Heart right ventricle (tissue), 16 donors: ENCODE measurements at regions of chr4 and their contacts with region 1.

Region 1: GRCh38 chr4:138680989-138681604 is 334.5 kb upstream of the NOCT start:
- DNase-seq: peak; percentile 63 to 81
- ATAC-seq: peak; percentile 61 to 86 (median 71)
- H3K4me3 ChIP-seq: no peak overlapping the region
- H3K27ac ChIP-seq: no peak overlapping the region
- H3K4me1 ChIP-seq: peaks cover 0 to 19% (median 4%) of the 10 kb centered on the region in 9 donors
- H3K27me3 ChIP-seq: peaks cover 0 to 10% (median 0%) of the 10 kb centered on the region in 7 donors
- CTCF ChIP-seq: peak; percentile 91 to 95 (median 94)

Region 2: DNA sequence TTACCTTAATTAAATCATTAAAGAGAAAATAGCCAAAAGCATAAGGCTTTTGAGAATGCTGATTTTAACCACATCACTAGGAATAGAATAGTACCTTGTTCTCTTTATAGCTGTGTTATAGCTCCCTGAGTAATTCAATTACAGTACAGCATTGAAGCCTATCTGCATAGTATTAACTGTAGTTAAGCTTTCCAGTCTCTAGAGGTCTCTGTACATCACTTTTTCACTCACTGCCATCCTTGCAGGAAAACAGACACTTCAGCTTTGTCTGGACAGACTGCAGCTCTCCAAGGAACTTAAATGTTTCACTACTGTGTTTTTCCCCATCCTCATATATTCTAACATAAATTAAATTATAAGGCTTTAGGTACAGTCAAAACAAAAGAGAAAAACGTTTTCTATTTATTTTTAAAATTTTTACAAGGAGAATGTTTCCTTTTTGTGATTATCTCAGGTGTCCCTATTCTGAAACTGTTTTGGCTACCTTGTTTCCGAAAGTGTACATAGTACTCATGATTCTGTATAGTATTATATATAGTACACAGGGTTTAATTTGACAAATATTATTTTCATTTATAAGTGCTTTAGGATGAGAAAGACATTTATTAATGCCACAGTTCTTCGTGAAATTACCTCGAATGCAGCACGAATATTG is 1556.7 kb before region 1 on chr4:
- intact Hi-C with region 1: loop called in 5 of 10 experiments (anchors 5 to 10 kb)
- DNase-seq: peak in 1 of 2 donors; percentile 5
- ATAC-seq: peak; percentile 78 to 97 (median 88)
- H3K4me3 ChIP-seq: peak overlapping the region; percentile 2 to 52 (median 30)
- H3K27ac ChIP-seq: peak overlapping the region in 1 of 10 donors; percentile 14
- H3K4me1 ChIP-seq: no peaks in the 10 kb centered on the region
- H3K27me3 ChIP-seq: no peaks in the 10 kb centered on the region
- CTCF ChIP-seq: peak in 8 of 9 donors; percentile 16 to 80 (median 64)

Region 3: DNA sequence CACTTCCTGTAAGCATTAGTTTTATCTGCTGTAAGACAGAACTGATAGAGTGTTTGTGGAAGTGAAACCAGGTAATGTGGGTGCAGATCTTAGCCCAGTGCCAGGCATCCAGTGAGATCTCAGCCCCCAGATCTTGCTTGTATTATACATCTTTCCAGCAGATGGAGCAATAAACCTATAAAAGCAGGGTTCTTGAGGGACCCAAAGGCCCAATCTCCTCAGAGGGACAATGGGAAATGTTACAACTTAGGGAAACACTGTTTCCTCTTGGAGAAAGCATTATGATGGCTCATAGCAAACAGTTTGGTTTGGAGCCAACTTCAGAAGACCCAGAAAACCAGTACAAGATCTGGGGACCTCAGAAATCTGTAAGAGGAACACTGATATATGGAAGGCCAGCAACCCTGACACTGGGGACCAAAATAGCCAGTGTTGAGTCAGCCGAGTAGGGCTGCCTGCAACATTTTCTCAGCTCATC is 645.3 kb before region 1 on chr4:
- intact Hi-C with region 1: loop called (anchors 1 to 10 kb)
- DNase-seq: peak in 1 of 2 donors; percentile 11
- ATAC-seq: peak; percentile 77 to 91 (median 84)
- H3K4me3 ChIP-seq: no peak overlapping the region
- H3K27ac ChIP-seq: no peak overlapping the region
- H3K4me1 ChIP-seq: peaks cover 0 to 8% (median 0%) of the 10 kb centered on the region in 9 donors
- H3K27me3 ChIP-seq: no peaks in the 10 kb centered on the region
- CTCF ChIP-seq: peak in 8 of 9 donors; percentile 19 to 76 (median 62)

Region 4: GRCh38 chr4:138182838-138183426 is 498.2 kb before region 1 on chr4:
- intact Hi-C with region 1: loop called in 6 of 10 experiments (anchors 2 to 10 kb)
- DNase-seq: peak in 1 of 2 donors; percentile 23
- ATAC-seq: peak in 5 of 8 donors; percentile 49 to 78 (median 64)
- H3K4me3 ChIP-seq: no peak overlapping the region
- H3K27ac ChIP-seq: no peak overlapping the region
- H3K4me1 ChIP-seq: peaks cover 0 to 21% (median 15%) of the 10 kb centered on the region in 9 donors
- H3K27me3 ChIP-seq: no peaks in the 10 kb centered on the region
- CTCF ChIP-seq: peak; percentile 24 to 78 (median 68)

Region 5: GRCh38 chr4:138576684-138577083 is 104.4 kb before region 1 on chr4:
- intact Hi-C with region 1: no loop called
- DNase-seq: no peak
- ATAC-seq: no peak
- H3K4me3 ChIP-seq: no peak overlapping the region
- H3K27ac ChIP-seq: no peak overlapping the region
- H3K4me1 ChIP-seq: no peaks in the 10 kb centered on the region
- H3K27me3 ChIP-seq: no peaks in the 10 kb centered on the region
- CTCF ChIP-seq: no peak

Region 6: DNA sequence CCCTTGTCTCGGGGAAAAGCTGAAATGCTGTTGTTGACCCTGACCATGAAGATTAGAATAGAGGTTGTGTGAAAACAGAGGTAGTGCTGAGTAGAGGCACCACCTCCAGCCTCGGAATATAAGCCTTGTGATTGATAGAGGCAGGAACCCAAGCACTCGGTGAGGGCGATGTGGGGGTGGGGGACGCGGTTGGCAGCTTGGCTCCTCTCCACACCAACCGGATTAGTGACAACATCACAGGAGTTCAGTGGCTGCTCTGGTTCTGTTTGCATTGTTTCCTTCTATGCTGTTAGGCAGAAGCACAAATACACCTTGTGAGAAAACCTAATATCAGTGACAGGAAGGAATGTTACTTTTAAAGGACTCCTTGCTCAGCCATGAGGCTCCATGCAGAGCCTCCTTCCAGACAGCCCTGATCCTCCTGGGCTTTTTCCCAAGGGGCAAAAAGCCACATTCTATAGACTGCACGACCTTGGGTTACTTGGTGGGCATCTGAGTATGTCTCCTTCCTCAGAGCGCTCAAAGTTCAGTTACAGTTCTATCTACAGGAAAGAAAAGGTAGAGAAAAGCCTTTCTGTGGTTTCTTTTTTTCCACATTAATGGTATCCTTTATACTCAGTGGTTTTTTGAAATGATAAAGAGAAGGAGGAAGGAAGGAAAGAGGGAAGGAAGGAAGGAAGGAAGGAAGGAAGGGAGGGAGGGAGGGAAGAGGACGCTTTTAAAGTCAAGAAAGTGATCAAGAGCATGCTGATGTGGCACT is 184.0 kb after region 1 on chr4:
- intact Hi-C with region 1: loop called in 7 of 10 experiments (anchors 2 to 10 kb)
- DNase-seq: no peak
- ATAC-seq: no peak
- H3K4me3 ChIP-seq: no peak overlapping the region
- H3K27ac ChIP-seq: no peak overlapping the region
- H3K4me1 ChIP-seq: no peaks in the 10 kb centered on the region
- H3K27me3 ChIP-seq: peaks cover 0 to 13% (median 4%) of the 10 kb centered on the region in 7 donors
- CTCF ChIP-seq: no peak

Region 7: DNA sequence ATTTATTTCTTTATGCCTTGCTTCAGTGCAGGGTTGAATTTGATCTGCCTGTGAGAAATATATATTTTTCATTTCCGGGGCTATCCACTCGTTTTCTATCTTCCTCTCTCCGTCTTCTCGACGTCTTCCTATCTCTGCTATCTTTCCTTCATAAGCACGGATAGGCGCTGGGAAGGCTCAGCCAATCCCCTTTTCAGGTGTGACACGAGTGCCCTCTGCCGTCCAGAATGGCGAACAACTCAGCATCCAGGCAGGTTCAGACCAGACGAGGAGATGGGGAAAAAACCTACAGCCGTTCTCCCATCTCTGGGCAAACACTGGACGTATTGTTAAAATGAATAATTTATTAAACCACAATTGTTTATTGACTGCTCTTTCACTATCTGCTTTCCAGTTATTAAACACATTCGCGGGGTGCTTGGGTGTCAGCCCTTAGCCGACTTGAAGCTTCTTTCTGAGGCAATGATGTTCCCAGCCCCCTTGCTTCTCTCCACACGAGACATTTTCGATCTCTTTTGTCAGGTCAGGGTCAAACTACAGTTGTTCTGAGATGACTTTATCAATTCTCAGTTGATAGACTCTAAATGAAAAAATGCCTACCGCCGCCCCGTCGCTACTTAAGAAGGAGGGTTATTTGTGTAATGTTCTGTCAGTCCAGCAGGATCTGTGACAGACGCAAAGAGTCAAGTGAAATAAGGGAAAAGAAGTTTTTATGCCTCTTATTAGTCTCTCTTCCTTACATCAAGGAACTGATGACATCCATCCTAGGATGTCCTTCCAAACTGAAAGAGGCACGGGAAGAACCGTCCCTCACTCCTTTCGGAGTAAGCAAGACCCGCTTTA is 238.2 kb after region 1 on chr4:
- intact Hi-C with region 1: loop called in 3 of 10 experiments (anchors 5 to 10 kb)
- DNase-seq: peak; percentile 60 to 76
- ATAC-seq: peak; percentile 42 to 95 (median 82)
- H3K4me3 ChIP-seq: peak overlapping the region in 2 of 10 donors; percentile 11 to 17
- H3K27ac ChIP-seq: no peak overlapping the region
- H3K4me1 ChIP-seq: peaks cover 0 to 11% (median 0%) of the 10 kb centered on the region in 9 donors
- H3K27me3 ChIP-seq: no peaks in the 10 kb centered on the region
- CTCF ChIP-seq: peak; percentile 52 to 85 (median 78)